Activated naive CD4-positive, alpha-beta T cell treated with anti-CD3 and anti-CD28 coated beads for 36 hours (primary cell): ENCODE measurements at regions of chr12 and their contacts with region 1.

Region 1: DNA sequence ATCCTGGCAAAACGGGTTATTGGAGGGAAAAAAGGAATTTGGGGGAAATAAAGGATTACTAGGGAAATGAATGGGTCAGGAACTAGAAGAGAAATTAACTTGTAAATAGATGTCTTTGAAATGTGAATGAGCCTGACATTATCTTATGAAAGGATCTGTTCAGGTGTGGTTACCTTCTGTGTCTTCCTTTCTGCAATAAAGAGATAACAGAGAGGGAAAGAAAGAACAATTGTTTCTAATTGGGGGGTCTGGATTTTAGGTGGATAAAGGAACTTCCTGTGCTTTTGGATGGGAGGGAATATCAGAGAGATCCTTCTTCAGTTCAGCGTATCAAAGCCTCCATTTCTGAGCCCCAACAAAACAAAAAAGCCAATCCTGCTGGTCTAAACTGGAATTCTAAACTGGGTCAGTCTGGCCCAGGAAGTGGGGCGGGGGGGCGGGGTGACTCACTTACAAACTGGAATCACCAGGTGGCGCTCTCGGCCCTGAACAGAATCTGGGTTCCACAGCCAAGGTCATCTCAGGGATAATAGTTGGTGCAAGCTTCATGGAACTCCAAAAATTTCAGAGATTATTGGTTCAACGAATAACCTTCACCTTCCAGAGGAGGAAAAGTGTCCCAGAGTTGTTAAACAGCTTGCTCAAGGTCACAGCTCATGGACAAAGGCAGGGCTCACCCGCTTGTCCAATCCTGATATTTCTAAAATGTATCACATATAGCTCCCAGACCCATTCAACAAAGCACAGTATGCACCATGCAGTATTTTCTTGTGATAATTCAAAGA is 15.2 kb upstream of the PEBP1 start:
- DNase-seq: peak; percentile 80
- H3K4me3 Mint-ChIP-seq: no peak overlapping the region
- H3K27ac Mint-ChIP-seq: no peak overlapping the region
- H3K4me1 Mint-ChIP-seq: peaks cover 5% of the 10 kb centered on the region
- H3K27me3 Mint-ChIP-seq: no peaks in the 10 kb centered on the region

Region 2: GRCh38 chr12:118082161-118082560 is 38.6 kb before region 1 on chr12:
- CTCF ChIA-PET with region 1: no interaction called
- intact Hi-C with region 1: no loop called
- DNase-seq: no peak
- H3K4me3 Mint-ChIP-seq: no peak overlapping the region
- H3K27ac Mint-ChIP-seq: no peak overlapping the region
- H3K4me1 Mint-ChIP-seq: no peaks in the 10 kb centered on the region
- H3K27me3 Mint-ChIP-seq: no peaks in the 10 kb centered on the region

Region 3: DNA sequence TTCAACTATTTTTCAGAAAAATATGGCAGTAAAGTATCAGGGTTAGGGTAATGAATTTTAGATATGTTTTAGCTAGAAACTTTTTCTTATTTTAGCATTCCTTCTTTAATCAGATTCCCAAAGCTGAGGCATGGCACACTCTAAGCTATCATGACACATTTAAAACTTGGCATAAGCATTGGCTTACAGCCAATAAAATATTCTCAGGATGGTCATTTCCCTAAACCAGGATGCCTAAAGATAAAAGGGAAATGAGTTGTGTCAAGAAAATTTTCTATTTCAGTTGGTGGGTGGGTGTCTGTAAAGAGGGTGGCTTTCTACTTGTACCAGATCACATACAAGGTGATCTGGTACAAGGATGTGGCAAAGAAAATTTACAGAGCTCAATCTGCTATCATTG is 62.9 kb after region 1 on chr12:
- CTCF ChIA-PET with region 1: interaction called, 5 read pairs
- intact Hi-C with region 1: loop called (anchors 5 kb)
- DNase-seq: no peak
- H3K4me3 Mint-ChIP-seq: no peak overlapping the region
- H3K27ac Mint-ChIP-seq: no peak overlapping the region
- H3K4me1 Mint-ChIP-seq: peaks cover 18% of the 10 kb centered on the region
- H3K27me3 Mint-ChIP-seq: no peaks in the 10 kb centered on the region